ENCODE measurements at regions of chr1 and their contacts with region 1.

Region 1: GRCh38 chr1:112542206-112542973 is 33.6 kb downstream of the WNT2B start:
- DNase-seq: no peak
- ATAC-seq: no peak
- H3K4me3 ChIP-seq: no peak overlapping the region
- H3K27ac ChIP-seq: no peak overlapping the region
- H3K4me1 ChIP-seq: no peaks in the 10 kb centered on the region
- H3K27me3 ChIP-seq: no peaks in the 10 kb centered on the region
- CTCF ChIP-seq: no peak
- EP300 ChIP-seq: no peak
- POLR2A ChIP-seq: no peak
- RAD21 ChIP-seq: no peak

Region 2: GRCh38 chr1:111739194-111739924 is 803.0 kb before region 1 on chr1 and contains the start of gene INKA2:
- CTCF ChIA-PET with region 1: no interaction called
- POLR2A ChIA-PET with region 1: no interaction called
- in situ Hi-C with region 1: no loop called
- intact Hi-C with region 1: no loop called
- DNase-seq: peak; percentile 91 to 99 (median 98)
- ATAC-seq: peak; percentile 90
- H3K4me3 ChIP-seq: peak within 1 kb of the TSS; percentile 44
- H3K27ac ChIP-seq: no peak within 1 kb of the TSS
- H3K4me1 ChIP-seq: peaks cover 14 to 28% of the 10 kb centered on the region in 2 experiments
- H3K27me3 ChIP-seq: peaks cover 39 to 75% of the 10 kb centered on the region in 2 experiments
- CTCF ChIP-seq: no peak
- EP300 ChIP-seq: no peak
- POLR2A ChIP-seq: no peak; the same call in 1 of the 2 replicates
- RAD21 ChIP-seq: no peak
- polyA plus RNA-seq, gene INKA2: 0.04 TPM in 1 of 2 experiments, not detected in the other

Region 3: GRCh38 chr1:112308716-112309115 is 233.7 kb before region 1 on chr1:
- CTCF ChIA-PET with region 1: no interaction called
- POLR2A ChIA-PET with region 1: no interaction called
- in situ Hi-C with region 1: no loop called
- intact Hi-C with region 1: no loop called
- DNase-seq: no peak
- ATAC-seq: no peak
- H3K4me3 ChIP-seq: no peak overlapping the region
- H3K27ac ChIP-seq: no peak overlapping the region
- H3K4me1 ChIP-seq: no peaks in the 10 kb centered on the region; a peak in 1 of 5 replicates
- H3K27me3 ChIP-seq: peaks cover 5 to 11% of the 10 kb centered on the region in 2 experiments; a peak in 3 of 5 replicates
- CTCF ChIP-seq: no peak
- EP300 ChIP-seq: no peak
- POLR2A ChIP-seq: no peak
- RAD21 ChIP-seq: no peak

Region 4: DNA sequence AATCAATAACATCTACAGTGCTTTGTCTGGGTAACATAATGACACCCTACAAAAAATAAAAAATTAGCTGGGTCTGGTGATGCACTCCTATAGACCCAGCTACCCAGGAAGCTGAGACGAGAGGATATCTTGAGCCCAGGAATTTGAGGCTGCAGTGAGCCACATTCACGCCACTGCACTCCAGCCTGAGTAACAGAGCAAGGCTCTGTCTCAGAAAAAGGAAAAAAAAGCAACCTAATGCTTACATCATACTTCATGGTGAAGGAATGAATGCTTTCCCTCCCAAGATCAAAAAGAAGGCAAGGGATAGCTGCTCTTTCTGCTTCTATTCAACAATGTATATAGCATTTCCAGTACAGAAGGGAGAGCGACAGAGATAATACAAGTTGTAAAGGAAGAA is 170.6 kb before region 1 on chr1:
- CTCF ChIA-PET with region 1: no interaction called
- POLR2A ChIA-PET with region 1: no interaction called
- in situ Hi-C with region 1: no loop called
- intact Hi-C with region 1: no loop called
- DNase-seq: no peak
- ATAC-seq: no peak
- H3K4me3 ChIP-seq: no peak overlapping the region
- H3K27ac ChIP-seq: no peak overlapping the region
- H3K4me1 ChIP-seq: no peaks in the 10 kb centered on the region
- H3K27me3 ChIP-seq: peaks cover 10 to 13% of the 10 kb centered on the region in 2 experiments
- CTCF ChIP-seq: no peak
- EP300 ChIP-seq: no peak
- POLR2A ChIP-seq: no peak
- RAD21 ChIP-seq: no peak

Region 5: DNA sequence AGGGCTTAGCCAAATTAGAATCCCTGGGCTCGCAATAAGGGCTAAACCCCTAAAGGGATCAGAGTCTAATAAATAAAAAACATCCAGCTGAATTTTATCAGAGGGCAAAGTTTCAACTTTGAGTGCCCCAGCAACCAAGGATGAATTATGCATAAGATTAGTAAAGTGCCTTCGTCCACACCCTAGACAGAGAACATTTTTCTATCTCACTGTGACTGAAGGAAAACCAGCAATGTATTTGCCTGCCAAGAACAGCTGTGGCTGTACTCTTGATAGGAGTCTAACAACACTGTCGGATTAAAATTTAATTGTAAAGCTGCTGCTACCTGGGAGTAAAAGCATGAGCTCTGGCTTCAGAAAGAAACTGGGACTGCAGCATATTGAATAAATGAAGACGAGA is 10.3 kb before region 1 on chr1:
- CTCF ChIA-PET with region 1: no interaction called
- POLR2A ChIA-PET with region 1: interaction called, 18 read pairs
- in situ Hi-C with region 1: no loop called
- intact Hi-C with region 1: no loop called
- DNase-seq: no peak
- ATAC-seq: no peak
- H3K4me3 ChIP-seq: no peak overlapping the region
- H3K27ac ChIP-seq: no peak overlapping the region
- H3K4me1 ChIP-seq: no peaks in the 10 kb centered on the region
- H3K27me3 ChIP-seq: no peaks in the 10 kb centered on the region
- CTCF ChIP-seq: no peak
- EP300 ChIP-seq: no peak
- POLR2A ChIP-seq: no peak
- RAD21 ChIP-seq: no peak